Heart left ventricle (tissue), 16 donors: ENCODE measurements at regions of chr6 and their contacts with region 1.

Region 1: GRCh38 chr6:160972111-160972510 is 19.5 kb upstream of the MAP3K4 start:
- DNase-seq: no peak
- ATAC-seq: no peak
- H3K4me3 ChIP-seq: no peak overlapping the region
- H3K27ac ChIP-seq: peak overlapping the region in 4 of 12 donors; percentile 33 to 83 (median 82)
- H3K4me1 ChIP-seq: peaks cover 0 to 38% (median 20%) of the 10 kb centered on the region in 12 donors
- H3K27me3 ChIP-seq: no peaks in the 10 kb centered on the region
- CTCF ChIP-seq: no peak
- POLR2A ChIP-seq: no peak

Region 2: GRCh38 chr6:160895562-160895961 is 76.5 kb before region 1 on chr6:
- intact Hi-C with region 1: no loop called
- DNase-seq: no peak
- ATAC-seq: no peak
- H3K4me3 ChIP-seq: no peak overlapping the region
- H3K27ac ChIP-seq: no peak overlapping the region
- H3K4me1 ChIP-seq: peaks cover 0 to 5% (median 0%) of the 10 kb centered on the region in 12 donors
- H3K27me3 ChIP-seq: no peaks in the 10 kb centered on the region
- CTCF ChIP-seq: no peak
- POLR2A ChIP-seq: no peak

Region 3: GRCh38 chr6:160950507-160950906 is 21.6 kb before region 1 on chr6:
- intact Hi-C with region 1: loop called in 1 of 10 experiments (anchors 1 kb)
- DNase-seq: peak in 2 of 5 donors; percentile 33 to 50
- ATAC-seq: peak; percentile 75 to 94 (median 86)
- H3K4me3 ChIP-seq: no peak overlapping the region
- H3K27ac ChIP-seq: peak overlapping the region in 11 of 12 donors; percentile 36 to 72 (median 70)
- H3K4me1 ChIP-seq: peaks cover 0 to 22% (median 9%) of the 10 kb centered on the region in 12 donors
- H3K27me3 ChIP-seq: no peaks in the 10 kb centered on the region
- CTCF ChIP-seq: no peak
- POLR2A ChIP-seq: no peak

Region 4: DNA sequence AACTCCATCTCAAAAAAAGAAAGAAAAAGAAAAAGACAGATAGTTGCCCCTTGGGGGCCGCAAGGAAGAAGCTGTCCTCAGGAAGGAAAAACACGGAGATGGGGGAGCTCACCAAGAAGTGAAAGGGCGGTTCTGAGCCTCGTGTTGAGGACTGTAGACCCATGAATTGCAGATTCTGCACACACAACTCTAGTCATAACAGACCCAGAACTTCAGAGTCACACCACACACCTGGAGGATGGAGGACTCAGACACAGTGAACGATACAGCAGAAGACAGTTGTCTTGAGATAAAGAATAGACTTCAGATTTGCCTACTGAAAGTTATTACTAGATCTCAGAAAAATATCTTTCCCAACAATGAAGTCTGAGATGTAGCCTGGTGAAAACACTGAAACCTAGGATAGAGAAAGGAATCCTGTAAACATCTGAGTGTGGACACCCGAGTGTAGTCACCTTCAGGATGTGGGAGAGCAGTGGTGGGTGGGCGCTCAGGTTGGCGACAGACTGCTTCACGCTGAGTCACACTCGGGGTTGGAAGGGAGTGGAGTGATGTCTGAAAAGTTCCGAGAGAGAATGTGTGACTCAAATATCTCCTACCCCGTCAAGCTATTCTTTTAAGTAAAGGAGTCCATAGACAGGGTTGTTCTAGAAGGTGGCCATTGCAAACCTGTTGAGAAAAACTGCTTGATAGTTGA is 107.6 kb after region 1 on chr6:
- intact Hi-C with region 1: no loop called
- DNase-seq: peak in 1 of 5 donors; percentile 55
- ATAC-seq: peak in 2 of 4 donors; percentile 30 to 75
- H3K4me3 ChIP-seq: no peak overlapping the region
- H3K27ac ChIP-seq: no peak overlapping the region
- H3K4me1 ChIP-seq: peaks cover 0 to 16% (median 4%) of the 10 kb centered on the region in 12 donors
- H3K27me3 ChIP-seq: no peaks in the 10 kb centered on the region
- CTCF ChIP-seq: no peak
- POLR2A ChIP-seq: no peak